AG04449 (cell line): ENCODE measurements at regions of chr11 and their contacts with region 1.

Region 1: DNA sequence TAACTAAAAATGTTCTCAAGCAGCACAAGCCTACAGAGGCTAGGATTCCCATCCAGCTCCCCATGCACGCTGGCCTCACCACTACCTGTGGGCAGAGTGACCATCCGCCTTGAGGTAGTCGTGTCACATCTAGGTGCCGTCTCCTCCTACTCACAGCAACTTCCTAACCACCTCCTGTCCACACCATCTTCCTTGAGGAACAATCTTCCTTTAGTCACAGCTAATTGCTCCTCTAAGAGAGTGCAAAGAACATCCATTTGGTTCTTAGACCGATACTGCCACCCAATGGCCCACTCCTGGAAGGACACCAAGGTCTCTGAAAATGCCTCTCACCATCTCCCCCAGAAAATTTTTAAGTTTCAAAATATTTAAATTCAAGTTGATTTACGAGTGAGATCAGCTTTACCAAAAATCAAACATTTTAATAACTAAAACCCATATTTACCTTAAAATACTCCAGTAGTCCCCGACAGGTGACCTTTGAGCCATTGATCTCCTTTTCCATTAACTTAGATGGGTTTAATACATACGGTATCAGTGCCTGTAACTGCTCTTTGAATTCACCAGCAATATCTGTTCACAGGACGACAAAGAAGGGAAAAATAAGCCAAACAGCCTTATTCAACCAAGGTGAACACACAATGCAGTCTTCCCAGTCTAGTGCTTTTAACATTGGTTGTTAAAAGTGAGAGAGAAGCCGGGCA is 21.7 kb upstream of the PLAAT3 start:
- DNase-seq: no peak
- H3K4me3 ChIP-seq: no peak overlapping the region
- CTCF ChIP-seq: peak; percentile 69

Region 2: GRCh38 chr11:63478896-63479295 is 157.0 kb before region 1 on chr11:
- CTCF ChIA-PET with region 1: interaction called, 194 read pairs
- POLR2A ChIA-PET with region 1: no interaction called
- DNase-seq: peak; percentile 37
- H3K4me3 ChIP-seq: no peak overlapping the region
- CTCF ChIP-seq: peak; percentile 81

Region 3: DNA sequence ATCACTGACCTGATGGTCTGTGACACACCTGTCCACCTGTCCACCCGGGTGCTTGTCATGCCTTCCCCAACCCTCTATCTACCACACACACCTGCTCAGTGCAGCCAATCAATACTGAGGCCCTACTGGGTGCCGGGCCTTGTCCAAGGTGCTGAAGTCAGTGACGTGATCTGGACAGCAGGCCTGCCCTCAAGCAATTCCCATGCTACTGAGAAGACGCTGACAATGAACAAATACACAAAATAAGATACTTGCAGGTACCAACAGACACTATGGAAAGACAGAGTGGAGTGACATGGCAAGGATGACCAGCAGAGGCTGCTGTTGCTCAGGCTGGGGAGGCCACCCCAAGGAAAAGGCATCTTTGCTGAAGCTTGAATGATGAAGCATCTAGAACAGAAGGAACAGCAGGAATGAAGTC is 42.9 kb before region 1 on chr11:
- CTCF ChIA-PET with region 1: interaction called, 89 read pairs
- POLR2A ChIA-PET with region 1: no interaction called
- DNase-seq: no peak
- H3K4me3 ChIP-seq: no peak overlapping the region
- CTCF ChIP-seq: peak; percentile 82

Region 4: GRCh38 chr11:63608351-63609038 is 27.4 kb before region 1 on chr11:
- CTCF ChIA-PET with region 1: interaction called, 11 read pairs
- POLR2A ChIA-PET with region 1: no interaction called
- DNase-seq: no peak
- H3K4me3 ChIP-seq: no peak overlapping the region
- CTCF ChIP-seq: no peak

Region 5: DNA sequence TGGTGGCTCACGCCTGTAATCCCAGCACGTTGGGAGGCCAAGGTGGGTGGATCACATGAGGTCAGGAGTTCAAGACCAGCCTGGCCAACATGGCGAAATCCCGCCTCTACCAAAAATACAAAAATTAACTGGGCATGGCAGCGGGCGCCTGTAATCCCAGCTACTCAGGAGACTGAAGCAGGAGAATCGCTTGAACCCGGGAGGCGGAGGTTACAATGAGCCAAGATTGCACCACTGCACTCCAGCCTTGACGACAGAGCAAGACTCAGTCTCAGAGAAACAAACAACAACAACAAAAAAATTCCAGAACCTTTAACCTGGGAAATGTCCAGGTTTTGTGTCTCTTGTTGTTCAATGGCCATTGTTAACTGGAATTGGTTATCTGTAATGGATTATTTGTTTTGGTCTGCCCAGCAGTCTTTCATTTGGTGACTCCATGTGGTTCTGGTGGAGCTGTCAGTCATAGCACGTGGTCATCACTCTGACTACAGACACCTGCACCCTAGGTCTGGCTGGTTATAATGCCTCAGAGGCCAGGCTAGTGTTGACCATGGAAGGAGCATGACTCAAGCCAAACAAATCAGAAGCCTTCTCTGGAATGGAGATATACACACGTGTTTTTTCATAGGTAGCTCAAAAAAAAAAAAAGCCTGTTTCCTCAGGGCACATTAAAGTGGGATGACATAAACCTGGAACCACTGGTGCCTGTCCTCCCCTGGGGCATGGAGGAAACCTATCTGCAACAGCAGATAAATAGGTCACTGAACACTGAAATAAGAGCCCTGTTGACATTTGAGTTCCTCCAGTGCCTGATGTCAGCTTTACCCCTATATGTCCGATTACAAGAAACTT is 13.8 kb before region 1 on chr11:
- CTCF ChIA-PET with region 1: interaction called, 23 read pairs
- POLR2A ChIA-PET with region 1: interaction called, 3 read pairs
- DNase-seq: no peak
- H3K4me3 ChIP-seq: no peak overlapping the region
- CTCF ChIP-seq: no peak

Region 6: DNA sequence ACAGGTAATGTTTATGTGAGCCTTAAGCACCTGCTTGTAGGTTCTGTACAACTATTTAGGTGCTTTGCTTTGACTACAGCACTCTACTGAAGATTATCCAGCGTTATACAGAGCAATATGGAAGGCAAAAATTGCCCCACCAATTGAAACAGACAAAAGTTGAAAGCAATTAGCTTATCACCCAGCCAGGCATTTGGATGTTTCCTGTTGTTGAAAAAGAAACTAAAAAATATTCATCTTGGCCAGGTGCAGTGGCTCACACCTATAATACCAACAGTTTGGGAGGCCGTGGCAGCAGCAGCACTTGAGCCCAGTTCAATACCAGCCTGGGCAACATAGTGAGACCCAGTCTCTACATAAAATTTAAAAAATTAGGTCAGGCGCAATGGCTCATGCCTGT is 16.8 kb after region 1 on chr11:
- CTCF ChIA-PET with region 1: interaction called, 27 read pairs
- POLR2A ChIA-PET with region 1: no interaction called
- DNase-seq: no peak
- H3K4me3 ChIP-seq: no peak overlapping the region
- CTCF ChIP-seq: no peak